ENCODE measurements at regions of chr10 and their contacts with region 1.

Region 1: GRCh38 chr10:95755511-95756004 is 405 bp upstream of the ENTPD1 start:
- DNase-seq: no peak
- H3K4me3 Mint-ChIP-seq: peak overlapping the region; percentile 85
- H3K27ac Mint-ChIP-seq: peak overlapping the region; percentile 84
- H3K4me1 Mint-ChIP-seq: peaks cover 48% of the 10 kb centered on the region
- H3K27me3 Mint-ChIP-seq: peaks cover 2% of the 10 kb centered on the region

Region 2: GRCh38 chr10:95741807-95742467 is 13.6 kb before region 1 on chr10:
- intact Hi-C with region 1: loop called (anchors 2 kb)
- DNase-seq: no peak
- H3K4me3 Mint-ChIP-seq: peak overlapping the region; percentile 20
- H3K27ac Mint-ChIP-seq: no peak overlapping the region
- H3K4me1 Mint-ChIP-seq: peaks cover 30% of the 10 kb centered on the region
- H3K27me3 Mint-ChIP-seq: peaks cover 6% of the 10 kb centered on the region

Region 3: GRCh38 chr10:95783741-95784140 is 28.2 kb after region 1 on chr10:
- intact Hi-C with region 1: loop called (anchors 1 kb)
- DNase-seq: no peak
- H3K4me3 Mint-ChIP-seq: no peak overlapping the region
- H3K27ac Mint-ChIP-seq: peak overlapping the region; percentile 69
- H3K4me1 Mint-ChIP-seq: peaks cover 75% of the 10 kb centered on the region
- H3K27me3 Mint-ChIP-seq: no peaks in the 10 kb centered on the region

Region 4: DNA sequence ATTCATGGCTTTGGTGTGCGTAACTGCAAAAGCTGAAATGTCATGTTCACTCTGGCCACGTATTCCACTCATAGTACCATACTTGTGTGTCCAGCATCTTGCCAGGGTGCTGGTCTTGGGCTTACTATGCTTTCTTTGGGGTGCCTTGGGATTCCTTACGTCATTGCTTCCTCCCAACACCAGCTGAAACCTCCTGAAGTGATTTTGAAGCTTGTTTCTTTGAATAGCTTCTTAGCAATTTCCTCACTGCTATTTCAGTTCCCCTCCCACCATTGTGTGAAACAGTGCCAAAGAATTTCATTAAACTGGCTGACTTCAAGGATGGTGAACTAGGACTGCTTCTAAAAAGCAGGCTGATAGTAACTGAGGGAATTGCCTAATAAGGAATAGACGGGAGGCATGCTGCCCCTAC is 37.3 kb after region 1 on chr10:
- intact Hi-C with region 1: loop called (anchors 1 kb)
- DNase-seq: no peak
- H3K4me3 Mint-ChIP-seq: no peak overlapping the region
- H3K27ac Mint-ChIP-seq: peak overlapping the region; percentile 95
- H3K4me1 Mint-ChIP-seq: peaks cover 88% of the 10 kb centered on the region
- H3K27me3 Mint-ChIP-seq: peaks cover under 1% of the 10 kb centered on the region

Region 5: GRCh38 chr10:95832216-95833041 is 76.9 kb after region 1 on chr10:
- intact Hi-C with region 1: loop called (anchors 1 kb)
- DNase-seq: peak; percentile 71
- H3K4me3 Mint-ChIP-seq: peak overlapping the region; percentile 86
- H3K27ac Mint-ChIP-seq: peak overlapping the region; percentile 100
- H3K4me1 Mint-ChIP-seq: peaks cover 73% of the 10 kb centered on the region
- H3K27me3 Mint-ChIP-seq: no peaks in the 10 kb centered on the region

Region 6: DNA sequence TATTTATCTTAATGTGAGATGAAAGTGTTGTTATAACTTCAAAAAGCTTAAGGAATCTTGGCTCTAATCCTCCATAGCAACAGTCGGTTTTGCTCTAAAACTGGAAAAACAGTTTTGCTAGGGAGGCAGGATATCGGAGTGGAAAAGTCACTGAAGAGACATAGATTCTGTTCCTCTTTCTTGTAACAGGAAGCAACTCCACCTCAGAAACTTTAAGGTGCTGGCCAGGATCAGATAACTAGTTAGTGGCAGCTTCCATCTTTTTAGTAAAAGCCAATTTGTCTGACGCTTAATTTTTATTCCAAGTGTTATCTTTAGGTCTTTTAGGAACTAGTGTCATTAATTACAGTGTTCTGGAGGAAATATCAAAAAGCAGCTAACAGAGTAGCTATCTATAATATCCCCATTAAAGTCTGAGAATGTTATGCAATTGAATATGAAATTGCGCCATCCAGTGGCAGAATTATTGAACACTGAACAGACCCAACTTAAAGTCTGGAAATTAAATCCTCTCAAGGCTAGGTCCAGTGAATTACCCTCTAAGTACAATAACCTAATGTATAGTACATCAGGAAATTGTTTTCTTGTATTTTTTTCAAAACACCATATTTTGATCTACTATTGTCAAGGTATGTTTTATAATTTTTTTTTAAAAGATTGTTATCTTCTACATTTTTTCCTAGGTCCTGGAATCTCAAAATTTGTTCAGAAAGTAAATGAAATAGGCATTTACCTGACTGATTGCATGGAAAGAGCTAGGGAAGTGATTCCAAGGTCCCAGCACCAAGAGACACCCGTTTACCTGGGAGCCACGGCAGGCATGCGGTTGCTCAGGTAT is 86.3 kb after region 1 on chr10:
- intact Hi-C with region 1: loop called (anchors 1 kb)
- DNase-seq: no peak
- H3K4me3 Mint-ChIP-seq: peak overlapping the region; percentile 45
- H3K27ac Mint-ChIP-seq: peak overlapping the region; percentile 81
- H3K4me1 Mint-ChIP-seq: peaks cover 75% of the 10 kb centered on the region
- H3K27me3 Mint-ChIP-seq: no peaks in the 10 kb centered on the region